ENCODE measurements at regions of chr1 and their contacts with region 1.

Region 1: DNA sequence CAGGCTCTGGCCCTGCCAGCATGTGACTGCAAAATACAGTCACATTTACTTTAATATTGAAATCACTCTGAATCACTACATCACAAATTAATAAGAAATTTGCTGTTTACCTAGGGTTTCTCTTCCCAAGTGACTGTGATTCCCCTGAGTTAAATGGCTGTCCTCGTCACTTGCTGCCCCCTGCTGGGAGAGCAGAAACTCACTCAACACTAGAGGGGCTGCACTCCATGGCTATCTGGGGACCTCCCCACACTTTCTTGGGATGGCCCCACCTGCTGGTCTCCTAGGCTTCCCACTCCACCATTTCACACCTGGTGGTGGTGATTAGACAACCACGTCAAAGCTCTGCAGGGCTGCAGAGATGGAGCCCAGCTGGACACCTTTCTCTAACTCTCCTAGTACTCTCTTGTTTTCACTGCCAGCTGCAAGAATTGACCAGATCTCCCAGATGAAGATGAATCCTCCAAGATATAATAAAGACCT is 63.4 kb downstream of the CD2 start:
- DNase-seq: peak; percentile 50 to 89 (median 70)
- ATAC-seq: peak; percentile 63
- H3K4me3 ChIP-seq: no peak overlapping the region
- H3K4me3 Mint-ChIP-seq: peak overlapping the region; percentile 68
- H3K27ac ChIP-seq: no peak overlapping the region
- H3K27ac Mint-ChIP-seq: peak overlapping the region; percentile 95
- H3K4me1 ChIP-seq: peaks cover 23% of the 10 kb centered on the region
- H3K4me1 Mint-ChIP-seq: peaks cover 38% of the 10 kb centered on the region
- H3K27me3 ChIP-seq: no peaks in the 10 kb centered on the region
- H3K27me3 Mint-ChIP-seq: no peaks in the 10 kb centered on the region
- CTCF ChIP-seq: peak; percentile 94

Region 2: GRCh38 chr1:116521186-116521585 is 296.4 kb before region 1 on chr1:
- CTCF ChIA-PET with region 1: no interaction called
- POLR2A ChIA-PET with region 1: no interaction called
- intact Hi-C with region 1: no loop called
- DNase-seq: no peak
- ATAC-seq: no peak
- H3K4me3 ChIP-seq: no peak overlapping the region
- H3K4me3 Mint-ChIP-seq: no peak overlapping the region
- H3K27ac ChIP-seq: no peak overlapping the region
- H3K27ac Mint-ChIP-seq: no peak overlapping the region
- H3K4me1 ChIP-seq: peaks cover 11% of the 10 kb centered on the region
- H3K4me1 Mint-ChIP-seq: peaks cover 21% of the 10 kb centered on the region
- H3K27me3 ChIP-seq: no peaks in the 10 kb centered on the region
- H3K27me3 Mint-ChIP-seq: no peaks in the 10 kb centered on the region
- CTCF ChIP-seq: no peak

Region 3: GRCh38 chr1:116737020-116737854 is 80.4 kb before region 1 on chr1:
- CTCF ChIA-PET with region 1: interaction called, 74 read pairs
- POLR2A ChIA-PET with region 1: interaction called, 61 read pairs
- intact Hi-C with region 1: loop called (anchors 1 kb)
- DNase-seq: peak; percentile 66 to 90 (median 73)
- ATAC-seq: peak; percentile 67
- H3K4me3 ChIP-seq: peak overlapping the region; percentile 28
- H3K4me3 Mint-ChIP-seq: peak overlapping the region; percentile 76
- H3K27ac ChIP-seq: peak overlapping the region; percentile 93 to 98
- H3K27ac Mint-ChIP-seq: peak overlapping the region; percentile 99
- H3K4me1 ChIP-seq: peaks cover 57% of the 10 kb centered on the region
- H3K4me1 Mint-ChIP-seq: peaks cover 45% of the 10 kb centered on the region
- H3K27me3 ChIP-seq: no peaks in the 10 kb centered on the region
- H3K27me3 Mint-ChIP-seq: no peaks in the 10 kb centered on the region
- CTCF ChIP-seq: peak; percentile 97

Region 4: GRCh38 chr1:116763787-116764465 is 53.7 kb before region 1 on chr1:
- CTCF ChIA-PET with region 1: interaction called, 31 read pairs
- POLR2A ChIA-PET with region 1: interaction called, 103 read pairs
- intact Hi-C with region 1: loop called (anchors 1 to 2 kb)
- DNase-seq: peak in 6 of 14 experiments; percentile 20 to 74 (median 52)
- ATAC-seq: peak; percentile 18
- H3K4me3 ChIP-seq: peak overlapping the region; percentile 31
- H3K4me3 Mint-ChIP-seq: peak overlapping the region; percentile 83
- H3K27ac ChIP-seq: peak overlapping the region; percentile 88 to 89
- H3K27ac Mint-ChIP-seq: peak overlapping the region; percentile 99
- H3K4me1 ChIP-seq: peaks cover 96% of the 10 kb centered on the region
- H3K4me1 Mint-ChIP-seq: peaks cover 97% of the 10 kb centered on the region
- H3K27me3 ChIP-seq: no peaks in the 10 kb centered on the region
- H3K27me3 Mint-ChIP-seq: no peaks in the 10 kb centered on the region
- CTCF ChIP-seq: peak; percentile 52

Region 5: GRCh38 chr1:116794804-116795481 is 22.7 kb before region 1 on chr1:
- CTCF ChIA-PET with region 1: interaction called, 4 read pairs
- POLR2A ChIA-PET with region 1: interaction called, 15 read pairs
- intact Hi-C with region 1: no loop called
- DNase-seq: no peak
- ATAC-seq: no peak
- H3K4me3 ChIP-seq: no peak overlapping the region
- H3K4me3 Mint-ChIP-seq: no peak overlapping the region
- H3K27ac ChIP-seq: no peak overlapping the region
- H3K27ac Mint-ChIP-seq: no peak overlapping the region
- H3K4me1 ChIP-seq: peaks cover 50% of the 10 kb centered on the region
- H3K4me1 Mint-ChIP-seq: peaks cover 61% of the 10 kb centered on the region
- H3K27me3 ChIP-seq: no peaks in the 10 kb centered on the region
- H3K27me3 Mint-ChIP-seq: no peaks in the 10 kb centered on the region
- CTCF ChIP-seq: no peak

Region 6: DNA sequence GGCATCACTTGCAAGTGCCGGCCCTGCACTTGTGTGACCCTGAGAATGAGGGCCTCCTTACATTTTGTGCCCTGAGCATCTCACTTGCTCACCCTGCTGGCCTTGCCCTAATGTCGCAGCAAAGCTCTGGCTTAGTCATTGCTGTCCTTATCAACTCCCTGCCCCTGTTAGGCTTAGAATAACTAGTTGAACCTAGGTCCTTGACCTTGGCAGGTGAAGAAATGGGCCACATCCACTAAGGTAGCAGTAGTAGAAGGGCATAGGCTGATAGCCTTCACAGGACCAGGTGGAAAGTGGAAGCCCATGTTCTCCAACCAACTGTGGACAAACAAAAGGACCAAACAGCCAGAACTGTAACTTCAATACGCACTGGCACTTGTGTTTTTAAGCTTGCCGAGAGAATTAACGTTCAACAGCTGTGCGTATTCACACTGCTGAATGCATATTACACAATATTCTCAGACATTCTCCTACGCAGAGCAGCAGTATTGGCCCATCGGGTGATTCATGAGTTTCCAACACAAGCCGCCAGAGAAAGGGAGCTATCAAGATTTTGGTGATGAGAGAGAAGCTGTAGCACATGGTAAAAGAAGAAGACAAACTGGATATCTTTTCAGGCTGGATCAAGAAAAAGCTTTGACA is 64.4 kb after region 1 on chr1:
- CTCF ChIA-PET with region 1: interaction called, 3 read pairs
- POLR2A ChIA-PET with region 1: interaction called, 4 read pairs
- intact Hi-C with region 1: loop called in 1 of 2 experiments (anchors 5 kb)
- DNase-seq: peak in 6 of 14 experiments; percentile 9 to 55 (median 31)
- ATAC-seq: no peak
- H3K4me3 ChIP-seq: no peak overlapping the region
- H3K4me3 Mint-ChIP-seq: no peak overlapping the region
- H3K27ac ChIP-seq: no peak overlapping the region
- H3K27ac Mint-ChIP-seq: no peak overlapping the region
- H3K4me1 ChIP-seq: peaks cover 23% of the 10 kb centered on the region
- H3K4me1 Mint-ChIP-seq: peaks cover 3% of the 10 kb centered on the region
- H3K27me3 ChIP-seq: no peaks in the 10 kb centered on the region
- H3K27me3 Mint-ChIP-seq: no peaks in the 10 kb centered on the region
- CTCF ChIP-seq: peak; percentile 31

Region 7: GRCh38 chr1:116919802-116920201 is 102.2 kb after region 1 on chr1:
- CTCF ChIA-PET with region 1: no interaction called
- POLR2A ChIA-PET with region 1: no interaction called
- intact Hi-C with region 1: no loop called
- DNase-seq: no peak
- ATAC-seq: no peak
- H3K4me3 ChIP-seq: no peak overlapping the region
- H3K4me3 Mint-ChIP-seq: no peak overlapping the region
- H3K27ac ChIP-seq: no peak overlapping the region
- H3K27ac Mint-ChIP-seq: no peak overlapping the region
- H3K4me1 ChIP-seq: peaks cover 5% of the 10 kb centered on the region
- H3K4me1 Mint-ChIP-seq: peaks cover 4% of the 10 kb centered on the region
- H3K27me3 ChIP-seq: no peaks in the 10 kb centered on the region
- H3K27me3 Mint-ChIP-seq: no peaks in the 10 kb centered on the region
- CTCF ChIP-seq: no peak

Region 8: DNA sequence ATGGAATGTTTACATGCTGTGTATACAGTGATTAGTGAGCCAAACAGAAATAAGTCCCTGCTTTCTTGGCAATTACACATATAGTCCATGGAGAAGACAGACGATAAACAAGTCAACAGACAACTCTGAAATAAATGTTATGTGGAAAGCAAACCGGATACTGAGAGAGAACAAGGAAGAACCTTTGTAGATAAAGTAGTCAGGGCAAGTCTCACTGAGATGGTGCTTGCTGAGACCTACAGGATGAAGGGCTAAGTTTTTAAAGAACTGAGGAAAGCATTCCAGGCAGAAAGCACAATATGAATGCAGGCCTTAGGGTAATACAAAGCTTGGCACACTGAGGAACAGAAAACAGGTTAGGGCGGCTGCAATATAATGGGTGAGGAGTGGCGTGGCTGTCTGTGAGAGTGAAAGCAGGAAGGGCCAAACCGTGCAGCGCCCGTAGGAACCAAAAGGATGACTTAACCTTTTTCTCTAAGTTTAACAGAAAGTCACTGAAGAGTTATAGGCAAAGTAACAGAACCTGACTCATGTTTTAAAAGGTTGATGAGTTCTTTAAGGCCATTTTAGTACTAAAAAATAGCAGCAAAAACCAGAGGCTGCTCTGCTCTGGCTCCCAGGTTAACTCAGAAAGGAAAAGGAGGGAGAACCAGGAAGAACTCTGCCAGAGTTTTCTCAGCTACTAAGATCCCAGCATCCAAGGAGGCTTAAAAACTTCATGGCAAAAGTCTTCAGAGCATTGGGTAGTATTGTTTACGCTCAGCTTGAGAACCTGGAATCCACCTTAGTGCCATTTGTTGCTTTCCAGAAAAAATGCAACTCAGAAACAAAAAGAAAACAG is 233.8 kb after region 1 on chr1:
- CTCF ChIA-PET with region 1: interaction called, 4 read pairs
- POLR2A ChIA-PET with region 1: no interaction called
- intact Hi-C with region 1: loop called (anchors 1 to 2 kb)
- DNase-seq: peak in 8 of 14 experiments; percentile 13 to 55 (median 39)
- ATAC-seq: no peak
- H3K4me3 ChIP-seq: peak overlapping the region; percentile 35
- H3K4me3 Mint-ChIP-seq: peak overlapping the region; percentile 46
- H3K27ac ChIP-seq: peak overlapping the region in 1 of 2 donors; percentile 27
- H3K27ac Mint-ChIP-seq: peak overlapping the region; percentile 93
- H3K4me1 ChIP-seq: peaks cover 33% of the 10 kb centered on the region
- H3K4me1 Mint-ChIP-seq: peaks cover 63% of the 10 kb centered on the region
- H3K27me3 ChIP-seq: no peaks in the 10 kb centered on the region
- H3K27me3 Mint-ChIP-seq: no peaks in the 10 kb centered on the region
- CTCF ChIP-seq: no peak